ENCODE measurements at regions of chr15 and their contacts with region 1.

Region 1: DNA sequence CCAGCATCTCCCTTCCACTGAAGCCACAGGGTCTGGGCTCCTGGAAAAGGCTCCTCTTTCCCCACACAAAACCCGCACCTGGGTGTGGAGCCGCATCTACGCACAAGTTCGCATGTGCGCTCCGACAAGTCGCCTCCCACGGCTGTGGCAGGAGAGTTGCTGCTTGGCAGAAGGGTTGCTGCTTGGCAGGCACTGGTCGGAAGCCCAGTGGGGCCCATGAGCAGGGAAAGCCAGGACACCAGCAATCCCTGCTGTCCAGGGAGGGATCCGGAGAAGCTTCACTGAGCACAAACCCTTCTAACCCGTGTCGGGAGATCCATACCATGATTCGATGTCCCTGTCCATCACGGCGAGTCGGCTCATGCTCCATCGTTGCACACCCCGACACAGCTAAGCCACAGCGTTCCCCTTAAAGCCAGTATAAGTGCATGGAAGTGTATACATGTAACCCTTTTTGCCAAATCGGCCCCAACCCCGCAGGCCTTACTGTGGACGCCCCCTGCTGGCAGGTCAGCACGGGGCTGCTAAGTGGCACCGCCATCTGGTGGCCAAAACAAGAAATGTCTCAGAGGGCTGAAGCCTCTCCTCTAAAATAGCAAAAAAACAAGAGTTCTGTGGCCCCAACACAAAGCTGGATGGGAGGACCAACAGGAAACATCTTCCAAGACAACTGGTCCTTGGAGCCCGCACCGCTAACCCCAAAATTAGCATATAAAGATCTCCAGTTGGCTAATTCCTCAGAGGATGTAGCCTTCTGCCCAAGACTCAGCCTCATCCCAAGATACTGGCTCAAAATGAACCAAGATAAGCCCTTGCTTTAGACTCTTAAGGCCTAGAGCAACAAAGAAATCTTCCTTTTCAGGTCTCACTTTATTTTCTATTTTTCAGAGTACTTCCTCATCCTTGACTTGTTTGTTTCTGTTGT is 8.3 kb downstream of the ANKRD63 start:
- DNase-seq: peak; percentile 86
- CTCF ChIP-seq: peak; percentile 100

Region 2: GRCh38 chr15:40038638-40039543 is 235.7 kb before region 1 on chr15 and contains the start of gene SRP14:
- CTCF ChIA-PET with region 1: interaction called, 111 read pairs
- POLR2A ChIA-PET with region 1: no interaction called
- DNase-seq: peak; percentile 94
- CTCF ChIP-seq: no peak

Region 3: DNA sequence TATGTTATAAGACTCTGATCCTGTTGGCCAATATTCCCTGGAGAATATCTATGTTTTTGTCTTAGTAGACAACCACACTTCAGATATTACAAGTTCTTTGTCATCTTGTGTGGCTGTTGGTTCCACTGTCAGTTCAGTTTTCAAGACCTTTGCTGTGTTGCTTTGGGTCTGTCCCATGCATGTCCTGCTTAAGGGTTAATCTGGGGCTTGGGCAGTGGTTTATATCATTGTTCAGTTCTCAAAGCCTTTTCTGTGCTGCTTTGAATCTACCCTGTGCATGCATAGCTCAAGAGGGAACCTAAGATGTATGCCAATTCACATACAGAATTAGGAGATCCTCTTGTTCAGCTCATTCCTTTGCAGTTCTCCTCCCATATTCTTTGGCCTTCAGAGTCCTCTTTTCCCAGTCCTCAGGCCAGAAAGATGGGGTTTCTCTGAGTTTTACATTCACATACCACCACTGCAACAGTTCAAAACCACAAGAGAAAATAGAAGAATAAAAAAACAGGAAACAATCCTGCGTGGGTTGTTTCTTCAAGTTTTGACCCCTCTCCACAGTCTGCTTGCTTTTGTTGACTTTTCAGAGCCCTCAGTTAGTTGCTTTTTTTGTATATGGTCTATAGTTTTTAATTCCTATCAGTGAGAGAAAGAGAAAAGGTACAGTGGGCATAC is 92.1 kb before region 1 on chr15:
- CTCF ChIA-PET with region 1: interaction called, 11 read pairs
- POLR2A ChIA-PET with region 1: no interaction called
- DNase-seq: no peak
- CTCF ChIP-seq: no peak

Region 4: DNA sequence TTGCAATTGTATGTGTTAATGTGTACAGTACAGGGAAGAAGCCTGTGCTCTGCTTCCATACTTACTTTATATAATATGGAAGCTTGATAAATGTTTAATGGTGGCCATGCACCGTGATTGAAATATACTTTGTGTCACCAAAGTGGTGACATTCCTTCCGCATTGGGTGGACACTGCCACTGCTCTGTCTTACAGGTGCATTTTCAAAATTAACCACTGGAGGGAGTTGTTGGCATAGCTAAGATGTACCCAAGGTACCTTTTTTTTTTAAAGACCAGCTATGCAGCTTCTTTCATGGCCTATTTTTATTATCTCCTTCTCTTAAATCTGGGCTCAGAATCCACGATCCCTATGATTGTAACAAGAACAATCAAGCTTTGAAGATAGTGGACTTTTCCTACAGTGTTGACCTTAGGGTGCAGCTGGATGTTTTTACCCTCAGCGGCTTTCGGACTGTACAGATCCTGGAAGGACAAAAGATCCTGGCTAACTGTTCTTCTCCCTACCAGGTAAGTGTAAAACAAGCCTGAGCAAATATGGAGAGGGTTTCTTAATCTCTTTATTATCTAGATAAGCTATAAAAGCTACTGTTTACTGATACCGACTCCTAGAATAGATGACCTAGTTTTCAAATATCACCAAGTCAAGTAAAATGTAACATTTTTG is 57.3 kb before region 1 on chr15:
- CTCF ChIA-PET with region 1: interaction called, 525 read pairs
- POLR2A ChIA-PET with region 1: no interaction called
- DNase-seq: peak; percentile 64
- CTCF ChIP-seq: peak; percentile 67

Region 5: GRCh38 chr15:40290918-40291574 is 16.4 kb after region 1 on chr15:
- CTCF ChIA-PET with region 1: interaction called, 82 read pairs
- POLR2A ChIA-PET with region 1: no interaction called
- DNase-seq: no peak
- CTCF ChIP-seq: no peak

Region 6: DNA sequence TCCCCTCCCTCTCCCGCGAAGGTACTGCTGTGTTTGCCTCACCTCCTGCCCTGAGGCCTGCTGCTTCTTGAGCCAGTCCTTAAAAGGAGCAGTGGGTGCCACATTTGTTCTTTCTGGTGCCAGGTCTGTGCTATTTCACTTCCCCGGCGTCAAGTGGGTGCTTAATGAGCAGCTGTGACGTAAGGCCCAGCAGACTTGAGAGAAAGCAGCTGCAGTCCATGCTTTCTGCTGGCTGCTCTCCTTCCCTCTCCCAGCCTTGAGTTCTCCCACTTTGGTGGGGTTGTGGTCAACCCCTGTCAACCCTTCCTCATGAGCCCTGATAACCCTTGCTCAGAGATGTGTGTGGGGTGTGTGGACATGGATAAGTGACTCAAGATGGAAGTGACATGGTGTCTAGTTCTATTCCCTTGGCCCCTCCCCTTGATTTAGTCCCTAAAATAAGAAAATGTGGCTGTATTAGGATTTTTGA is 55.8 kb after region 1 on chr15:
- CTCF ChIA-PET with region 1: interaction called, 263 read pairs
- POLR2A ChIA-PET with region 1: no interaction called
- DNase-seq: no peak
- CTCF ChIP-seq: no peak

Measured in GM10248 (cell line).